GM12878 (cell line): ENCODE measurements at regions of chr16 and their contacts with region 1.

Region 1: GRCh38 chr16:57519796-57520360 is 16.5 kb downstream of the CCDC102A start:
- DNase-seq: no peak
- ATAC-seq: peak; percentile 96
- H3K4me3 ChIP-seq: no peak overlapping the region
- H3K27ac ChIP-seq: no peak overlapping the region
- H3K4me1 ChIP-seq: peaks cover 12% of the 10 kb centered on the region
- H3K27me3 ChIP-seq: no peaks in the 10 kb centered on the region
- CTCF ChIP-seq: peak; percentile 91 to 99 (median 98); a peak in 5 of 6 replicates
- EP300 ChIP-seq: no peak
- POLR2A ChIP-seq: no peak
- RAD21 ChIP-seq: peak; percentile 96

Region 2: GRCh38 chr16:57422026-57422944 is 97.6 kb before region 1 on chr16:
- CTCF ChIA-PET with region 1: interaction called, 174 read pairs
- POLR2A ChIA-PET with region 1: interaction called, 5 read pairs
- RAD21 ChIA-PET with region 1: interaction called, 49 read pairs
- SMC1A ChIA-PET with region 1: interaction called, 51 read pairs
- in situ Hi-C with region 1: loop called (anchors 5 kb)
- intact Hi-C with region 1: loop called (anchors 1 kb)
- DNase-seq: no peak
- ATAC-seq: peak; percentile 49
- H3K4me3 ChIP-seq: no peak overlapping the region
- H3K27ac ChIP-seq: no peak overlapping the region
- H3K4me1 ChIP-seq: peaks cover 4% of the 10 kb centered on the region
- H3K27me3 ChIP-seq: no peaks in the 10 kb centered on the region
- CTCF ChIP-seq: peak; percentile 48 to 62 (median 62); a peak in 5 of 6 replicates
- EP300 ChIP-seq: no peak
- POLR2A ChIP-seq: no peak
- RAD21 ChIP-seq: peak; percentile 71

Region 3: GRCh38 chr16:57447186-57447962 is 72.5 kb before region 1 on chr16 and contains the starts of genes CIAPIN1 and COQ9:
- CTCF ChIA-PET with region 1: interaction called, 15 read pairs
- POLR2A ChIA-PET with region 1: no interaction called
- RAD21 ChIA-PET with region 1: interaction called, 9 read pairs
- SMC1A ChIA-PET with region 1: interaction called, 4 read pairs
- in situ Hi-C with region 1: no loop called
- intact Hi-C with region 1: no loop called
- DNase-seq: peak; percentile 74
- ATAC-seq: peak; percentile 99
- H3K4me3 ChIP-seq: peak within 1 kb of the TSS; percentile 97
- H3K27ac ChIP-seq: peak within 1 kb of the TSS; percentile 88
- H3K4me1 ChIP-seq: peaks cover 6% of the 10 kb centered on the region; the same call in 1 of the 2 replicates
- H3K27me3 ChIP-seq: no peaks in the 10 kb centered on the region
- CTCF ChIP-seq: no peak
- EP300 ChIP-seq: 0 out of 4 replicates have a peak, but pooled peaks of 1 of the 2 experiments have one; percentile 8
- POLR2A ChIP-seq: peak; percentile 92
- RAD21 ChIP-seq: no peak
- polyA plus RNA-seq, gene CIAPIN1: 118 to 150 TPM
- polyA plus RNA-seq, gene COQ9: 24.1 to 32.7 TPM

Region 4: DNA sequence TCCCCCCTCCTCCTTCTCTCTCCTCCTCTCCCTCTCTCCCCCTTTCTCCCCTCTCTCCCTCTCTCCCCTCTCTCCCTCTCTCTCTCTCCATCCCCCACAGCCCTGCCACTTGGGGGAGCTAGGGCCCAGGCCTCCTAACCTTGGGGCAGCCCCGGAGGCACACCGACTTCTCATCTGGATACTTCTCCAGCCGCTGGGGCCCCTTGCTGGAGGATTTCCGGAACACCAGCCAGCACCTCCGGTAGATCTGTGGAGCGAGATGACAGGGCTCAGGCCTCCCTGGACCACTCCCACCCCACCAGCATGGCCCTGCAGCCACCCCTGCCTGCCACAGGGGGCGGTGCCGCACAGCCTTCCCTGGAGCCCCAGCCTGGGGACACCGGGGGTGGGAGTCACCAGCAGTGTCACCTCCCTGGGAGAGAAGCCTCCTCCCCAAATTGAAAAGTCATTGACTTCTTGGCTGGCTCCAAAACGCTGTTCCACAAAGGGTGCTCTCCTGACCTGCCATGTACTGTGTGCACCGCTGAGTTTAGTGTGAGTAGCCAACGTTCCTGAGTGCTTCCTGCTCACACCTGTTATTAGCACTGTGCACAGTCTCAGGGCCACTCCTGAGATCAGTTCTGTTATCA is 44.1 kb before region 1 on chr16:
- CTCF ChIA-PET with region 1: interaction called, 19 read pairs
- POLR2A ChIA-PET with region 1: no interaction called
- RAD21 ChIA-PET with region 1: interaction called, 3 read pairs
- SMC1A ChIA-PET with region 1: interaction called, 6 read pairs
- in situ Hi-C with region 1: no loop called
- intact Hi-C with region 1: loop called (anchors 1 kb)
- DNase-seq: no peak
- ATAC-seq: peak; percentile 96
- H3K4me3 ChIP-seq: no peak overlapping the region
- H3K27ac ChIP-seq: no peak overlapping the region
- H3K4me1 ChIP-seq: peaks cover 16% of the 10 kb centered on the region
- H3K27me3 ChIP-seq: no peaks in the 10 kb centered on the region
- CTCF ChIP-seq: peak; percentile 43 to 75 (median 73)
- EP300 ChIP-seq: no peak
- POLR2A ChIP-seq: no peak
- RAD21 ChIP-seq: peak; percentile 54

Region 5: DNA sequence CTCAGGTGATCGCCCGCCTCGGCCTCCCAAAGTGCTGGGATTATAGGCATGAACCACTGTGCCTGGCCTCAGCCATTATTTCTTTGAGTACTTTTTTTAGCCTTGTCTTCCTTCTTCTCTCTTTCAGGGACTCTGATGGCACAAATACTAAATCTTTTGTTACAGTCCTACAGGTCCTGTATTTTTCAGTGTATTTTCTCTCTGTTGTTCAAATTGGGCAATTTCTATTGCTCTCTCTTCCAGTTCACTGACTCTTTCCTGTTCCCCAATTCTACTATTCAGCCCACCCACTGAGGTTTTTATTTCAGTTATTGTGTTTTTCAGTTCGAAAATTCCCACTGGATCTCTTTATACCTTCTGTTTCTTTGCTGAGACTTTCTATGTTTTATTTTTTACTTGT is 26.1 kb before region 1 on chr16:
- CTCF ChIA-PET with region 1: interaction called, 25 read pairs
- POLR2A ChIA-PET with region 1: interaction called, 4 read pairs
- RAD21 ChIA-PET with region 1: no interaction called
- SMC1A ChIA-PET with region 1: no interaction called
- in situ Hi-C with region 1: no loop called
- intact Hi-C with region 1: no loop called
- DNase-seq: no peak
- ATAC-seq: no peak
- H3K4me3 ChIP-seq: no peak overlapping the region
- H3K27ac ChIP-seq: no peak overlapping the region
- H3K4me1 ChIP-seq: no peaks in the 10 kb centered on the region
- H3K27me3 ChIP-seq: no peaks in the 10 kb centered on the region; a peak in 1 of 4 replicates
- CTCF ChIP-seq: no peak
- EP300 ChIP-seq: no peak
- POLR2A ChIP-seq: no peak
- RAD21 ChIP-seq: no peak

Region 6: DNA sequence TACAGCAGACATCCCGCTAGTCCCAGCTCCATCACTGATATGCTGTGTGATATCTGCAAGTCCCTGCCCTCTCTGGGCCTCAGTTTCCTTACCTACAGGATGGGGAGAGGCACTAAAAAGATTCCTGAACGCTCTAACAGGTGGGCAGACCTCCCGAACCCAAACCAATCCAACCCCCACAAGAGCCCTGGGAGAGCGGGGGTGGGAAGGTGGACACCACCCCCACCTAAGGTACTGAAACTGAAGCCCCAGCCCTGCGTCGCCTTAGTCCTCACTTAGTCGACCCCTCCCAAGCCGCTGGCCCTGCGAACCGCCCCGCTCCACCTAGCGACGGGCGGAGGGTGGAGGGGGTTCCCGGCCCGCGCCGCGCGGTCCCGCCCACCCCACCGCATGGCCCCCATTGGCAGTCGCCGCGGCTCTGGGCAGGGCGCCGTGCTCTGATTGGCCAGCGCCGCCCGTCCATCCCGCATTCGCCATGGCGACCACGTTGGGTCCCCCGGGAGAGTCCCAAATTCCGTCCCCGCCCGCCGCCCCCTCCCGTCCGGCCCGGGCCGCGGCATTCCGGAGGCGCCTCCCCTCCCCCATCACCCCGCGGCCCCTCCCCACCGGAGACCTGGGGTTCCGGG is 15.9 kb after region 1 on chr16:
- CTCF ChIA-PET with region 1: interaction called, 18 read pairs
- POLR2A ChIA-PET with region 1: interaction called, 3 read pairs
- RAD21 ChIA-PET with region 1: interaction called, 17 read pairs
- SMC1A ChIA-PET with region 1: interaction called, 11 read pairs
- in situ Hi-C with region 1: no loop called
- intact Hi-C with region 1: no loop called
- DNase-seq: no peak
- ATAC-seq: peak; percentile 82
- H3K4me3 ChIP-seq: peak overlapping the region; percentile 88
- H3K27ac ChIP-seq: peak overlapping the region; percentile 85
- H3K4me1 ChIP-seq: peaks cover 63% of the 10 kb centered on the region
- H3K27me3 ChIP-seq: no peaks in the 10 kb centered on the region
- CTCF ChIP-seq: 0 out of 6 replicates have a peak, but pooled peaks of 2 of the 3 experiments have one; percentile 16 to 24
- EP300 ChIP-seq: no peak
- POLR2A ChIP-seq: no peak
- RAD21 ChIP-seq: no peak

Region 7: DNA sequence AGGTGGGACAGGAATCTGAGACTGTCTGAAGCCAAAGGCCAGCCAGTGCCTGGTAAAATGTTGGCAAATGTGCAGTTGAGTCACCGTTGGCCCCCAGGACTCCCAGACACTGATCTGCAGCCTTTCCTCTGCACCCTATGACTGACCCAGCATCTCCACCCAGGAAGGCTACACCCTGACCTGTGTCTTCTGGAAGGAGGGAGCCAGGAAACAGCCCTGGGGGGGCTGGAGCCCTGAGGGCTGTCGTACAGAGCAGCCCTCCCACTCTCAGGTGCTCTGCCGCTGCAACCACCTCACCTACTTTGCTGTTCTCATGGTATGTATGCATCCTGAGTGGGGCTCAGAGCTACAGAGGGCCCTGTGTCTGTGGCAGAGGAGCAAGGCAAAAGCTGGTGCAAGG is 46.6 kb after region 1 on chr16:
- CTCF ChIA-PET with region 1: no interaction called
- POLR2A ChIA-PET with region 1: no interaction called
- RAD21 ChIA-PET with region 1: no interaction called
- SMC1A ChIA-PET with region 1: no interaction called
- in situ Hi-C with region 1: no loop called
- intact Hi-C with region 1: no loop called
- DNase-seq: no peak
- ATAC-seq: no peak
- H3K4me3 ChIP-seq: no peak overlapping the region
- H3K27ac ChIP-seq: no peak overlapping the region
- H3K4me1 ChIP-seq: no peaks in the 10 kb centered on the region
- H3K27me3 ChIP-seq: no peaks in the 10 kb centered on the region; a peak in 1 of 4 replicates
- CTCF ChIP-seq: no peak
- EP300 ChIP-seq: no peak
- POLR2A ChIP-seq: no peak
- RAD21 ChIP-seq: no peak